Dendritic cell treated with granulocyte-macrophage colony-stimulating factor and Interleukin-4, amounts not matched to agents 40 ng/mL and 50 ng/mL, for 4 days (primary cell): ENCODE measurements at regions of chr3 and their contacts with region 1.

Region 1: GRCh38 chr3:120245386-120245785 is 39.6 kb downstream of the GPR156 start:
- H3K4me3 Mint-ChIP-seq: no peak overlapping the region
- H3K27ac Mint-ChIP-seq: no peak overlapping the region
- H3K4me1 Mint-ChIP-seq: peaks cover 5% of the 10 kb centered on the region
- H3K27me3 Mint-ChIP-seq: no peaks in the 10 kb centered on the region

Region 2: GRCh38 chr3:120417272-120417911 is 172.0 kb after region 1 on chr3:
- intact Hi-C with region 1: loop called (anchors 1 kb)
- H3K4me3 Mint-ChIP-seq: peak overlapping the region; percentile 65
- H3K27ac Mint-ChIP-seq: peak overlapping the region; percentile 69
- H3K4me1 Mint-ChIP-seq: peaks cover 31% of the 10 kb centered on the region
- H3K27me3 Mint-ChIP-seq: peaks cover 10% of the 10 kb centered on the region

Region 3: DNA sequence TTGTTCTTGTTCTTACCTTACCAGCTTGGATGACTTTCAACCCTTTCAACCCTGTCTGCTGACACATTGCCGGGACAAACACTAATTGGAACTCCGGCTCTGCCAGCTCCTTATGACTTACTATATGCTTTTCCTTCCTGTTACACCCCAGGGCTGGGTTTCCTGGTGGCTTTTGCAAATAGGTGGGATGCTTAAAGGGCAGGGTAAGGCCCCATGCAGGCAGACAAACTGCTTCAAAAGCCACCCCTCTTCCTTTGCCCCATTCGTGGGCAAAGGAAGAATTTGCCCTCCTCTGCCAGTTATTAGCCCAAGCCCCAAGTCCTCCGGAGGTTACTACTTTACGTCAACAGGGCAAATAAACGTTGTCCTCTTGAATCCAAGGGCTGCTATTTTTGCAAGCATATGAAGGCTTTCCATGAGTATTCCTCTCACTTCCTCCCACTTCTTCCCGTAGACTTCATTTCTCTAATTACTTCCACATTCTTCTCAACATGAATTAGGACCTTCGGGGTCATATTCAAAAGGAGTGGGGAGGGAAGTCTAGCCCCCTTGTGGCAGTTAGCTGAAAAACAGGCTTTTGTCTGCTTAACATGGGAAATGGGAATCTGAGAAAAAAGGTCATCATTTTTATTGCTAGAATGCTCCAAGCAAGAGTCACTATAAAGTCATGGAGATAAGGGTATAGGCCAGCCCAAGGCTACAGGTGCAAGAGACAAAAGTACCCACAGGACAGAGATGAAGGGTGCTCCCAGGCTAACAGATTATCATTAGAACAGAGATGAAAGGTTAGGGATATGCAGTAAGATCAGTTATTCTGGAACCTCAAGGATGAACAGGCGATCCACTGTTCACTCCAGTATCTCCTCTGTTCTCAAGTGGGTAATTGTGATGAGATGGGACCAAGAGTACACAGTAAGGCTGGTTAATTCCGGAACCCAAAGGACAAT is 261.7 kb after region 1 on chr3:
- intact Hi-C with region 1: loop called (anchors 2 kb)
- H3K4me3 Mint-ChIP-seq: no peak overlapping the region
- H3K27ac Mint-ChIP-seq: no peak overlapping the region
- H3K4me1 Mint-ChIP-seq: peaks cover 11% of the 10 kb centered on the region
- H3K27me3 Mint-ChIP-seq: peaks cover 5% of the 10 kb centered on the region